A673 (cell line): ENCODE measurements at regions of chr6 and their contacts with region 1.

Region 1: GRCh38 chr6:90218959-90219208 is 77.8 kb downstream of the BACH2 start:
- DNase-seq: no peak
- H3K4me3 ChIP-seq: no peak overlapping the region
- H3K27ac ChIP-seq: peak overlapping the region; percentile 87
- H3K4me1 ChIP-seq: peaks cover 30% of the 10 kb centered on the region
- H3K27me3 ChIP-seq: no peaks in the 10 kb centered on the region
- CTCF ChIP-seq: no peak

Region 2: GRCh38 chr6:90000864-90001731 is 217.8 kb before region 1 on chr6:
- CTCF ChIA-PET with region 1: interaction called, 16 read pairs
- POLR2A ChIA-PET with region 1: no interaction called
- intact Hi-C with region 1: no loop called
- DNase-seq: peak; percentile 43
- H3K4me3 ChIP-seq: no peak overlapping the region
- H3K27ac ChIP-seq: no peak overlapping the region
- H3K4me1 ChIP-seq: peaks cover 13% of the 10 kb centered on the region
- H3K27me3 ChIP-seq: peaks cover 4% of the 10 kb centered on the region
- CTCF ChIP-seq: no peak

Region 3: DNA sequence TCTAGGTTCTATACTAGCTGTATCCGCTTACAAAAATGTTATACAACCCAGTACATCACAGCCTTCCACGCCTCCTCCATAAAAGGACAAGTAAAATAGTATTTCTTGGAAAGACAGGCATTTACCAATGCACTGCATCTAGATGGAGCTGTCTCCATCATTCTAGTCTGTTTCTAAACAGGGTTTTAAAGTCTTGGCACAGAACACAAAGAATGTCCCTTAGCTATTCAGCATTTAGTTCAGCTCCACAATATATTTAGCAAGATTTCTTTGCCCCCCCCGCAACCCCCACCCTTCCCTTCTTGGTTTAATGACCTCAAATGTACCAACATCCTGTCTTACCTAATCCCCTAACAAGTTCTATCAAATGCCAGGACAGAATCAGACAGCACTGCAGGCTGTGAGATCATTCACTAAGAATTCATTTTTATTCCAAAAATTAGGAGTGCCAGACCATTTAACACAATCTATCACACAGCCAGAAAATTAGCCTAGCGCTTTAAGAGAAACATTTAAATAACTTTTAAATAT is 120.8 kb before region 1 on chr6:
- CTCF ChIA-PET with region 1: interaction called, 4 read pairs
- POLR2A ChIA-PET with region 1: interaction called, 36 read pairs
- intact Hi-C with region 1: no loop called
- DNase-seq: peak; percentile 87
- H3K4me3 ChIP-seq: no peak overlapping the region
- H3K27ac ChIP-seq: peak overlapping the region; percentile 33
- H3K4me1 ChIP-seq: peaks cover 7% of the 10 kb centered on the region
- H3K27me3 ChIP-seq: no peaks in the 10 kb centered on the region
- CTCF ChIP-seq: peak; percentile 58